ENCODE measurements at regions of chr22 and their contacts with region 1.

Region 1: GRCh38 chr22:44505796-44506354 is 7.8 kb upstream of the RTL6 start:
- DNase-seq: peak in 1 of 9 experiments; percentile 17
- ATAC-seq: no peak
- H3K4me3 ChIP-seq: no peak overlapping the region
- H3K4me3 Mint-ChIP-seq: no peak overlapping the region
- H3K27ac ChIP-seq: no peak overlapping the region
- H3K27ac Mint-ChIP-seq: no peak overlapping the region
- H3K4me1 ChIP-seq: no peaks in the 10 kb centered on the region
- H3K4me1 Mint-ChIP-seq: peaks cover 9% of the 10 kb centered on the region
- H3K27me3 ChIP-seq: no peaks in the 10 kb centered on the region
- H3K27me3 Mint-ChIP-seq: peaks cover 5% of the 10 kb centered on the region
- CTCF ChIP-seq: no peak

Region 2: DNA sequence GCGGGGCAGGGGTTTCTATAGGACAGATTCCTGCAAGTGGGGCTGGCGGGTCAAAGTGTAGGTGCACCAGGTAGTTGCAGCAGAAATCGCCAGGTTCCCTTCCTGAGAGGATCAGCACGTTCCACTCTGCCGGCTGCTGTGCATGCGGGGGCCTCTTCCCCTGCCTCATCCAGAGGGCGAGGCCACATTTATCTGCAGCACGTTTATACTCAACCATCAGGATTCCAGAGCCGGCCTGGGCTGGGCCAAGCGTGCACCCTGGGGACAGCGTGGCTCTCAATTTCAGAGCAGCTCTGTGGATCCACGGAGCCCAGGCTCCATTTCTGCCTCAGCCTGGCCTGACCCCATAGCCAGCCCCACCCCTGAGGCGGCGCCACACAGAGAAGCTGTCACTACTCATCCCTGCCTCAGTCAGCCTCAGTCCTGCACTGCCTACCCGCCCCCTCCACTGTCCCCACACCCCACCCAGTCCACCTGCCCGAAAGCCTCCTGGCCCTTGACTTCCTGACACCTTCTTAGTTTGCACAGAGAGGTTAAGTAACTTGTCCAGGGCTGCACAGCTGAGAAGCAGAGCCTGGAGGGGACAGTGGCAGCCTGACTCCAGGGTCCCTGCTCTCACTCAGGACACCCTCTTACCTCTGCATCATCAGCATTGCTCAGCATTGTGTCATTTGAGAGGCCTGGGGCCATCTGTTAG is 38.1 kb after region 1 on chr22:
- CTCF ChIA-PET with region 1: no interaction called
- POLR2A ChIA-PET with region 1: no interaction called
- intact Hi-C with region 1: loop called in 1 of 2 experiments (anchors 1 kb)
- DNase-seq: no peak
- ATAC-seq: no peak
- H3K4me3 ChIP-seq: no peak overlapping the region
- H3K4me3 Mint-ChIP-seq: no peak overlapping the region
- H3K27ac ChIP-seq: no peak overlapping the region
- H3K27ac Mint-ChIP-seq: no peak overlapping the region
- H3K4me1 ChIP-seq: no peaks in the 10 kb centered on the region
- H3K4me1 Mint-ChIP-seq: peaks cover 2% of the 10 kb centered on the region
- H3K27me3 ChIP-seq: no peaks in the 10 kb centered on the region
- H3K27me3 Mint-ChIP-seq: peaks cover 14% of the 10 kb centered on the region
- CTCF ChIP-seq: no peak